GM12878 (cell line): ENCODE measurements at regions of chr15 and their contacts with region 1.

Region 1: GRCh38 chr15:26259581-26259980 is 396.5 kb upstream of the ATP10A start:
- DNase-seq: no peak
- ATAC-seq: no peak
- H3K4me3 ChIP-seq: no peak overlapping the region
- H3K27ac ChIP-seq: no peak overlapping the region
- H3K4me1 ChIP-seq: no peaks in the 10 kb centered on the region
- H3K27me3 ChIP-seq: no peaks in the 10 kb centered on the region
- CTCF ChIP-seq: no peak
- EP300 ChIP-seq: no peak
- POLR2A ChIP-seq: no peak
- RAD21 ChIP-seq: no peak

Region 2: DNA sequence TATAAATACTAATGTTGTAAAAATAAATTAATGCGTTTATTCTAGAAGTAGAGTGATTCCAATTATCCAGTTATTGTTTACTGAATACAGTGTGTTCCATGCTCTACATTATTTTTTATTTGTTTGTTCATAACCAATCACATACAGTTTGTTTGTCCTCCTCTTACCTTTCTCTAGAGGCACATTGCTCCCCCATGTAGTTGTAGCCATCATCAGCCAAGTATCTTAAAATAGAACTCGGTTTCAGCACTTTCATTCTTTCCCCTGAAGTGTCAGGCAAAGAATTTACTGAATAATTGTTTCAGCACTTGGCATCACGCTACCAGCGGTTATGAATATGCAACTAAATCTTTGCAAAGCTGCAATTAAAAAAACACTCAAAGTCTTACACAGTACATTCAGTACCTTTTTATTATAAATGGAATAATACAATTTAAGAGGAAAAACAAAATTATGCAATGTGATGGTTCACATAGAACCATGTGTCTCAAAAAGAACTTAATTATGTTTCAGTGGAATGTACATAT is 52.2 kb after region 1 on chr15:
- CTCF ChIA-PET with region 1: no interaction called
- POLR2A ChIA-PET with region 1: no interaction called
- RAD21 ChIA-PET with region 1: no interaction called
- SMC1A ChIA-PET with region 1: no interaction called
- in situ Hi-C with region 1: loop called (anchors 5 kb)
- intact Hi-C with region 1: no loop called
- DNase-seq: no peak
- ATAC-seq: no peak
- H3K4me3 ChIP-seq: no peak overlapping the region
- H3K27ac ChIP-seq: no peak overlapping the region
- H3K4me1 ChIP-seq: no peaks in the 10 kb centered on the region
- H3K27me3 ChIP-seq: no peaks in the 10 kb centered on the region
- CTCF ChIP-seq: no peak
- EP300 ChIP-seq: no peak
- POLR2A ChIP-seq: no peak
- RAD21 ChIP-seq: no peak